PC-9 (cell line): ENCODE measurements at regions of chr12 and their contacts with region 1.

Region 1: DNA sequence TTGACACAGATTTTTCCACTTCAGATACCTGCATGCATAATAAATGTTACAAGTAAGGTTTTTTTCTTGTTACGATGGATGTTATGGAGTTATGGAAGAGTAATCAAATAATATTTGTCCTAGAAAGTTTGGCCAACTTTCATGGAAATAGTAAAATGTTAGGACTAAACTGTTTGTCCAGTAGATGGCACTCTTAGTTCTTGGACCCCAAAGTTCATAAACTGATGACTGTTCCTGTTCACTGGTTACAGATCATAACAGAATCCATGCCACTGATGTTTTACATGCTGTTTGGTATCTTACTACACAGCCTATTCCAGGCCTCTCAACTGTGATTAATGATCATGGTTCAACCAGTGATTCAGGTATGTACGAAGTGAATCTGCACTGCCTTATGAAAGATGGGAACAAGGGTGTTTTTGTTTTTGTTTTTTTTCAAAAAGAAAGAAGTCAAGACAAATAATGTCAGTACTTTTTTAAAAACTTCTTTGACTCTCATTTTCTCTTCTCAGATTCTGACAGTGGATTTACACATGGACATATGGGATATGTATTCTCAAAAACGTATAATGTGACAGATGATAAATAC is 48.8 kb upstream of the SLCO1C1 start:
- DNase-seq: no peak
- H3K4me3 ChIP-seq: no peak overlapping the region
- H3K27ac ChIP-seq: no peak overlapping the region
- H3K4me1 ChIP-seq: no peaks in the 10 kb centered on the region
- H3K27me3 ChIP-seq: no peaks in the 10 kb centered on the region
- CTCF ChIP-seq: peak; percentile 69

Region 2: GRCh38 chr12:20627001-20627588 is 19.2 kb before region 1 on chr12:
- CTCF ChIA-PET with region 1: interaction called, 22 read pairs
- POLR2A ChIA-PET with region 1: no interaction called
- intact Hi-C with region 1: no loop called
- DNase-seq: no peak
- H3K4me3 ChIP-seq: no peak overlapping the region
- H3K27ac ChIP-seq: no peak overlapping the region
- H3K4me1 ChIP-seq: 0 out of 2 replicates have a peak, but pooled peaks cover 8% of the 10 kb centered on the region
- H3K27me3 ChIP-seq: no peaks in the 10 kb centered on the region
- CTCF ChIP-seq: no peak

Region 3: DNA sequence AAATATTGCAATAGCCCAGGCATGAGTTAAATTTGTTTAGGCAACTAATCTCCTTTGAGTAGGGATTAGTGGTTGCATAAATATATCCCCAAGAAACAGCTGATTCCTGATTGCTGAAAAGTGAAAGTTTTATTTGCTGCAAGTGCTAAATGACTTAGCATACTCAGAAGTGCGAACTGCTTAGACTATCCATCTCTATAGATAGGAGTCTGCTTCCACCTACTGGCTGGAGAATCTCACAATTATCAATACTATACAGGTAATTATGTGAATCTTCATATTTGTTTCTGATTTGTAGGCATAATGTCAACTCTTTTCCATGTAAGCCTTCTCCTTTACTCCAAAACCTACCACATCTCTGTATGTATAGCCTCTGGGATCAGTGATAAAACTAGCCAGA is 152.2 kb after region 1 on chr12:
- CTCF ChIA-PET with region 1: no interaction called
- POLR2A ChIA-PET with region 1: no interaction called
- intact Hi-C with region 1: loop called (anchors 10 kb)
- DNase-seq: no peak
- H3K4me3 ChIP-seq: no peak overlapping the region
- H3K27ac ChIP-seq: no peak overlapping the region
- H3K4me1 ChIP-seq: no peaks in the 10 kb centered on the region
- H3K27me3 ChIP-seq: no peaks in the 10 kb centered on the region
- CTCF ChIP-seq: peak; percentile 62

Region 4: DNA sequence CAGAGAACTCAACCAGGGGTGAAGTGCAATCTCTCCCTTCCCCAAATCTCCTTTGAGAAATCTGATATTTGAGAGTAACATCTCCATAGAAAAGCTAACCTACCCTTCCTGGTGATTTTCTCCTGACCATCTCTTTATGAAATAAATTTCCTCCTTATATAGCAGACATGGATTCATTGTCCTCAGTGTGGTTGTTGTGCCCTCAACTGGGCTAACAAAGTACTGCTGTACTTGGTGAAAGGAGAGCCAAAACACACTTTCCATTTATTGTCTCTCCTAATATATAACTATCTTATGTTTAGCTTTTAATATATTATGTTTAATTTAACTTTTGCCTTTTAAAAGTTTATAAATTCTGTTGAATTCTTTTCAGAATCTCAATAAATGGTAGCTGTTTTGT is 419.5 kb after region 1 on chr12:
- CTCF ChIA-PET with region 1: no interaction called
- POLR2A ChIA-PET with region 1: no interaction called
- intact Hi-C with region 1: loop called (anchors 2 kb)
- DNase-seq: no peak
- H3K4me3 ChIP-seq: no peak overlapping the region
- H3K27ac ChIP-seq: no peak overlapping the region
- H3K4me1 ChIP-seq: no peaks in the 10 kb centered on the region
- H3K27me3 ChIP-seq: no peaks in the 10 kb centered on the region
- CTCF ChIP-seq: peak; percentile 54

Region 5: DNA sequence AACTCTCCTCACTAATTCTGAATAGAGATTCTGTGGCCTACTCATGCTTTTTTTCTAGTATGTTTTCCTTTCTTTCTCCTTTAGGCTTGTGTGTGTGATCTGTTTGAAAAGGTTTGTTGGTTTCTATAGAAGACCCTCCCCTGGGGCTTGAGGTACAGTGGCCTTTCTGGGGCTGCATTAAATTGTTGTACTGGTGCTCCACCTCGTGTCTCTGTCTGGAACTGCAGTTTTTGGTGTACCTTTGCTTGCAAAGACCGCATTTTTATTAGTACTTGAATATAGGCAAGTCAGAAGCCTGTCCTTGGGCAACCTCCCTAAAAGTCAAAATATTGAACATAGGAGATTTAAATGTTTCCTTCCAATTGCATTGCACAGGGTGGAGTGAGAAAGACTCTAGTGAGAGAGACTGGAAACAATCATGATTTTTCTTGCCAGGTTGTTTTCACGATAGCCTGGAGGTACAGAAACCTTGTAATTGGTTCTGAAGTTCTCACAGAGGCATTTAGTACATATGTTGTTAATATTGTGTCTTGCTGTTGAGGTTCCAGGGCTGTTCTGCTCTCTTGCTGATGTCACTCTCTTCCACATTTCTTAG is 523.6 kb after region 1 on chr12:
- CTCF ChIA-PET with region 1: no interaction called
- POLR2A ChIA-PET with region 1: no interaction called
- intact Hi-C with region 1: loop called (anchors 1 kb)
- DNase-seq: peak; percentile 44 to 53
- H3K4me3 ChIP-seq: no peak overlapping the region
- H3K27ac ChIP-seq: no peak overlapping the region
- H3K4me1 ChIP-seq: no peaks in the 10 kb centered on the region
- H3K27me3 ChIP-seq: no peaks in the 10 kb centered on the region
- CTCF ChIP-seq: peak; percentile 96

Region 6: DNA sequence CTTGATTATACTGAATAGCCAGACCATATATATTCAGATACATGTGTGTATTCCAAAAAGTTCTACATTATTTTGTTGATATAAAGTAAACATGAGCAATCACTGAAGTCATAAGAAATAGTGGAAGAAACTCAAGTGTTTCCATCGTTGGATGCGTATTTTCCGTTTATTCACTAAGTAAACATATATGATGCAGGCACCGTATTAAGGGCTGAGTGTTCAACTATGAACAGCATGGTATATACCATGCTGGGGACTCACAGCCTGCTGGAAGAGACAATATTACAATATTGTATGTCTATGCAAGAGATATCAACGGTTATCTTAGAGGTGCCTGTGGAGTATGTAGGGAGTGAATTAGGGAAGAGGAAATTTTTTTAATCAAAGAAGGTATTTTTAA is 792.3 kb after region 1 on chr12:
- CTCF ChIA-PET with region 1: no interaction called
- POLR2A ChIA-PET with region 1: no interaction called
- intact Hi-C with region 1: loop called (anchors 5 kb)
- DNase-seq: no peak
- H3K4me3 ChIP-seq: peak overlapping the region; percentile 99
- H3K27ac ChIP-seq: peak overlapping the region; percentile 97
- H3K4me1 ChIP-seq: peaks cover 23% of the 10 kb centered on the region
- H3K27me3 ChIP-seq: no peaks in the 10 kb centered on the region
- CTCF ChIP-seq: no peak

Region 7: DNA sequence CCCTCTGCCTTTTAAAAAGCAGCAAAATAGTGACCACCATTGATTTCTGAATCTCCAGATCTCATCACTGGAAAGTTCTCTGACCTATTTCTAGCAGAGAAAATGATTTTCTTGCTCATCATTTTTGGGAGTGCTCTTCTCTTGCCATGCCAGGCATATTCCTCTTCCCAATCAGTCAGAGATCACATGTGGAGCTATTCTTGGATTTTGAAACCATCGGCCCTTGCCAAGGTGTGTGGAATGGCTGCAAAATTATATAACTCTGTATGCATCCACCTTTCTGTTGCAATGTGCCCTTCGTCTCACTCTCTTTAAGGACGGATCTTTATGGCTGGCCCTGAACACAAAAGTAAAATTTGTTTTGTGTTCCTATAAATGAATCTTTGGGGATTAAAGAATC is 1036.8 kb after region 1 on chr12:
- CTCF ChIA-PET with region 1: no interaction called
- POLR2A ChIA-PET with region 1: no interaction called
- intact Hi-C with region 1: loop called (anchors 10 kb)
- DNase-seq: no peak
- H3K4me3 ChIP-seq: no peak overlapping the region
- H3K27ac ChIP-seq: no peak overlapping the region
- H3K4me1 ChIP-seq: no peaks in the 10 kb centered on the region
- H3K27me3 ChIP-seq: no peaks in the 10 kb centered on the region
- CTCF ChIP-seq: no peak